ENCODE measurements at regions of chr22 and their contacts with region 1.

Region 1: GRCh38 chr22:50004918-50005317 is 7.6 kb downstream of the IL17REL start:
- DNase-seq: no peak
- H3K4me3 ChIP-seq: no peak overlapping the region
- H3K27ac ChIP-seq: no peak overlapping the region
- H3K4me1 ChIP-seq: peaks cover 0 to 3% (median 2%) of the 10 kb centered on the region in 4 experiments
- H3K27me3 ChIP-seq: peaks cover 0 to 16% (median 8%) of the 10 kb centered on the region in 5 experiments

Region 2: DNA sequence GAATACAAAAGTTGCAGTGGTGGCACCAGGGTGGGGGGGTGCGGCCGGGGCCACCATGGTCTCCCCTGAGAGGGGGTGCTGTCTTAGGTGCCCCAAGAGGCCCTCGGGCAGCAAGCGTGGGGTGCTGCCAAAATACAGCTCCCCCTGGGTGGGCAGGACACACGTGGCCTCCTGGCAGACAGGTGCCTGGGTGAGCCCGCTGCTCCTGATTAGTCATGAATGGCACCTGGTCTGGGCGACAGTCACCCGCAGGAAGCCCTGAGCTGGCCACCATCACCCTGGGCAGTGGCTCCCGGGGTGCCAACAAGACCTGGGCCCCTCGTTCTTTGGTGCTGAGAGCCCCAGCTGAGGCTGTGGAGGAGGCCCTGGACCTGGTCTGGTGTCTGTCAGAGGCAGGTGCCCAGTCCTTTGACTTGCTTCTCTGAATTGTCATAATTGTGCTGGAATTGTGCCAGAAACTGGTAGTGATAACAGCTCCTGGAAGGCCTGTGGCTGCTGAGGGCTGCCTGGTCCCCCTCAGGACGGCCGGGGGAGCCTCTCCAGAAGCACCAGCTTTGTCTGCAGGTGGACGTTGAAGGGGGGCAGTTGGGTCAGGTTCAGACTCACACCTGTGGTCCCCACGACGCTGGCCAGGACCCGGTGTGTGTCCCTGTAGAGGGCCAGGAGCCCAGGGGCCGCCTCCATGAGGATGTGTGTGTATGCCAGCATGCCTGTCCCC is 101.4 kb before region 1 on chr22:
- CTCF ChIA-PET with region 1: no interaction called
- POLR2A ChIA-PET with region 1: no interaction called
- DNase-seq: no peak
- H3K4me3 ChIP-seq: no peak overlapping the region
- H3K27ac ChIP-seq: no peak overlapping the region
- H3K4me1 ChIP-seq: no peaks in the 10 kb centered on the region
- H3K27me3 ChIP-seq: no peaks in the 10 kb centered on the region

Region 3: GRCh38 chr22:49992921-49993648 is 11.8 kb before region 1 on chr22:
- CTCF ChIA-PET with region 1: interaction called, 16 read pairs
- POLR2A ChIA-PET with region 1: no interaction called
- DNase-seq: peak; percentile 60 to 72 (median 72)
- H3K4me3 ChIP-seq: peak overlapping the region in 1 of 7 experiments; percentile 30
- H3K27ac ChIP-seq: no peak overlapping the region
- H3K4me1 ChIP-seq: peaks cover 0 to 10% (median 4%) of the 10 kb centered on the region in 4 experiments
- H3K27me3 ChIP-seq: no peaks in the 10 kb centered on the region

Region 4: GRCh38 chr22:50141891-50142363 is 137.0 kb after region 1 on chr22:
- CTCF ChIA-PET with region 1: no interaction called
- POLR2A ChIA-PET with region 1: no interaction called
- DNase-seq: no peak
- H3K4me3 ChIP-seq: no peak overlapping the region
- H3K27ac ChIP-seq: no peak overlapping the region
- H3K4me1 ChIP-seq: peaks cover 0 to 2% (median 0%) of the 10 kb centered on the region in 4 experiments
- H3K27me3 ChIP-seq: no peaks in the 10 kb centered on the region